BJ (cell line): ENCODE measurements at regions of chr3 and their contacts with region 1.

Region 1: DNA sequence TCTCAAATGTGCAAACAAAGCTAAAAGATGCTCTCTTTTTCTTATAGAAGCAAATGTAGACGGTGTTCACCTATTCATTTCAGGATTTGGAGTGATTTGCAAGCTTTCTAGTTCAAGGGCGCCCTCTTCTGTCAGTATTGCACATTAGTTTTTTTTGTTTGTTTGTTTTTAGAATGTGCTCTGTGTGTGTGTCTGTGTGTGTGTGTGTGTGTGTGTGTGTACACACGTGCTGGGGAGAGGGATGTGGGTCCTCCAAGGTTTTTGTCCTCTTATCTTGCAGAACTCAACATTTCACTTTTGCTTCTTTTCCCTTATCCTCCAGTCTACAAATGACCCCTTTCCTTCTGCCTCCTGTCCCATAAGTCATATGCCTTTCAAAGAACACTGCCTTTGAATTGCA is 23.5 kb downstream of the DNAH1 start:
- DNase-seq: peak; percentile 31
- H3K4me3 ChIP-seq: no peak overlapping the region
- H3K27me3 ChIP-seq: no peaks in the 10 kb centered on the region
- CTCF ChIP-seq: peak; percentile 67

Region 2: GRCh38 chr3:52226229-52226817 is 113.3 kb before region 1 on chr3:
- CTCF ChIA-PET with region 1: interaction called, 150 read pairs
- POLR2A ChIA-PET with region 1: no interaction called
- DNase-seq: no peak
- H3K4me3 ChIP-seq: no peak overlapping the region
- H3K27me3 ChIP-seq: no peaks in the 10 kb centered on the region
- CTCF ChIP-seq: no peak

Region 3: GRCh38 chr3:52238761-52239701 is 100.6 kb before region 1 on chr3 and contains the start of gene TWF2:
- CTCF ChIA-PET with region 1: interaction called, 10 read pairs
- POLR2A ChIA-PET with region 1: no interaction called
- DNase-seq: no peak
- H3K4me3 ChIP-seq: peak within 1 kb of the TSS; percentile 90
- H3K27me3 ChIP-seq: no peaks in the 10 kb centered on the region
- CTCF ChIP-seq: peak; percentile 49
- polyA plus RNA-seq, gene TWF2: 109 and 205 TPM in 2 replicates

Region 4: GRCh38 chr3:52299879-52300611 is 39.6 kb before region 1 on chr3:
- CTCF ChIA-PET with region 1: interaction called, 65 read pairs
- POLR2A ChIA-PET with region 1: no interaction called
- DNase-seq: no peak
- H3K4me3 ChIP-seq: no peak overlapping the region
- H3K27me3 ChIP-seq: no peaks in the 10 kb centered on the region
- CTCF ChIP-seq: peak; percentile 41

Region 5: DNA sequence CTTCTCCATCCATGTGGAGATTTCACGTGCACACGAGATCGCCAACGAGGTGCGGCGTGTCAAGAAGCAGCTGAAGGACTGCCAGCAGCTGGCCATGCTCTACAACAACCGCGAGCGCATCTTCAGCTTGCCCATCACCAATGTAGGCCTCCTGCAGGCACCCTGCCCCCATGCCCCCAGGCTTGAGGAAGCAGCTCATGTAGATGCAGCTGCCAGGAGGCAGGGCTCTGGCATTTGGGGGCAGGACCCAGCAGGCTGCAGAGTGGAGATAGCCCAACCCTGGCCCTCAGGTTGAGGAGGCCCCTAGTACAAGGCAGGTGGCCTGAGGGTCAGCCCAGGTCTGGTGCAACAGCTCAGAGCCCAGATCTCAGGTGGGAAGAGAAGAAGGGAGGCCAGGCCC is 13.0 kb after region 1 on chr3:
- CTCF ChIA-PET with region 1: interaction called, 12 read pairs
- POLR2A ChIA-PET with region 1: interaction called, 3 read pairs
- DNase-seq: no peak
- H3K4me3 ChIP-seq: no peak overlapping the region
- H3K27me3 ChIP-seq: no peaks in the 10 kb centered on the region
- CTCF ChIP-seq: no peak